ENCODE measurements at regions of chr5 and their contacts with region 1.

Region 1: DNA sequence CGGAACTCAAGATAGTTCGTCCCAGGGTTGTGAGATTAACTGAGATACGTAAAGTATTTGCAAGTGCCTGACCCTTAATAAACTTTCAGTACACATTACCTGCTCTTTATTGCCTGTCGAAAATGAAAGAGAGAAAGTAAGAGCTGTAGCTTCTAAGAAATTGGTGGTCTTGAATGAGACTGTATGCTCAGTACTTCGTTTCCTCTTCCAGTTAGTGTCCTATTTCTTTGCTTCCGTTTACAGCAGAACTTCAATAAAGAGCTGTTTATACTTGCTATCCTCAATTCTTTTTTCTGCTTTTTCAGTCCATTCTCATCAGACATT is 534 bp downstream of the SRFBP1 start:
- DNase-seq: no peak
- H3K4me3 Mint-ChIP-seq: peak overlapping the region; percentile 91
- H3K27ac Mint-ChIP-seq: peak overlapping the region; percentile 94
- H3K4me1 Mint-ChIP-seq: peaks cover 36% of the 10 kb centered on the region
- H3K27me3 Mint-ChIP-seq: peaks cover 6% of the 10 kb centered on the region

Region 2: DNA sequence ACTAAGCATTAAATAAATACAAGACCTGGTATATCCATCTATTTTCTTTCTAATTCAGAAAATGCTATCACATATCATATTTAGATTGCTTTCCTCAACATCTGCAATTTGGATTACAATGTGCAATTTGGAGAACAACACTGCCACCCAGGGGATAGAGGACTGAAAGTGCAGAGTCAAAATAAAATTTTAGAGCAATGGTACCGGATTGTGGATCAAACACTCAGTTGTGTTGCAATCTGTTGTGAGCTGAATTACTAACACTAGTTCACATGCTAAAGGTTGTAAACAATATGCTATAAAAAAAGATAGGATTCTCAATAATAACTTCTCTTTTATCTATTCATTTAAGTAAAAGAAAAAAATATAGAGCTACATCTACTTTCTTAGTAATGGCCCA is 12.4 kb before region 1 on chr5:
- CTCF ChIA-PET with region 1: interaction called, 13 read pairs
- intact Hi-C with region 1: no loop called
- DNase-seq: peak; percentile 53
- H3K4me3 Mint-ChIP-seq: no peak overlapping the region
- H3K27ac Mint-ChIP-seq: no peak overlapping the region
- H3K4me1 Mint-ChIP-seq: no peaks in the 10 kb centered on the region
- H3K27me3 Mint-ChIP-seq: peaks cover 6% of the 10 kb centered on the region

Region 3: DNA sequence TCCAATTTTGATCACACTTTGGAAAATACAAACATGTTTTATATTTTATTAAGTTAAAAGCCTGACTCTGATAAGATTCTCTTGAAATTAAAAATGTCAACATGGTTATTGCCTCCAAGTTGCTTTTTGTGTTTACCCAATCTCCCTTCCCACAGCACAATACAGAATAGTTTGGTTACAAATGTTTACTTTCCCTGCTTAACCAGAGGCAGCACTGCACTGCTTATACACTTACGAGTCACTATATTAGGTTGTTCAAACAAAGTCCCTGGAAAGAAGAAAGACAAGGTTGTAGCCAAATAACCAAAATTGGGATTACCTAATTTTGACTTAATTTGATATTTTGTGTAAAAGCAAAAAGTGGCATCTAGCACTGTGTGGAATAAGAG is 25.4 kb after region 1 on chr5:
- CTCF ChIA-PET with region 1: no interaction called
- intact Hi-C with region 1: loop called (anchors 1 kb)
- DNase-seq: no peak
- H3K4me3 Mint-ChIP-seq: no peak overlapping the region
- H3K27ac Mint-ChIP-seq: no peak overlapping the region
- H3K4me1 Mint-ChIP-seq: peaks cover 15% of the 10 kb centered on the region
- H3K27me3 Mint-ChIP-seq: no peaks in the 10 kb centered on the region

Region 4: DNA sequence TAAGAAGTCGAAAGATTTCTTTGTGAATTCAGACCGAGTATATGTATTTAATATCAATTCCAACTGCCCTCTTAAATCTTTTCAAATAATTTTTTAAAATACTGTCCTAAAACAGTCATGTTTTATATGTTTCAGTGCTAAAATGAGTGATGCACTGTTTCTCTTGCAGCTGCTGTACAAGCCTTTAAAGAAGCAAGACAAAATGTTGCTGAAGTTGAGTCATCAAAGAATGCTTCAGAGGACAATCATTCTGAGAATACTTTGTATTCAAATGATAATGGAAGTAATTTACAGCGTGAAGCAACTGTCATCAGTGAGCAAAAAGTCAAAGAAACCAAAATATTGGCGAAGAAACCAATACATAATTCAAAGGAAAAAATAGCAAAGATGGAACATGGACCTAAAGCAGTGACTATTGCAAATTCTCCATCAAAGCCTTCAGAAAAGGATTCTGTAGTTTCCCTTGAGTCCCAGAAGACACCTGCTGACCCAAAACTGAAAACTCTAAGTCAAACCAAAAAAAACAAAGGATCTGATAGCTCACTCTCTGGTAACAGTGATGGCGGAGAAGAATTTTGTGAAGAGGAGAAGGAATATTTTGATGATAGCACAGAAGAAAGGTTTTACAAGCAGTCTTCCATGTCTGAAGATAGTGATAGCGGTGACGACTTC is 57.7 kb after region 1 on chr5:
- CTCF ChIA-PET with region 1: no interaction called
- intact Hi-C with region 1: loop called (anchors 1 kb)
- DNase-seq: no peak
- H3K4me3 Mint-ChIP-seq: no peak overlapping the region
- H3K27ac Mint-ChIP-seq: no peak overlapping the region
- H3K4me1 Mint-ChIP-seq: peaks cover 9% of the 10 kb centered on the region
- H3K27me3 Mint-ChIP-seq: no peaks in the 10 kb centered on the region

Region 5: GRCh38 chr5:122030251-122030650 is 67.9 kb after region 1 on chr5:
- CTCF ChIA-PET with region 1: no interaction called
- intact Hi-C with region 1: no loop called
- DNase-seq: no peak
- H3K4me3 Mint-ChIP-seq: no peak overlapping the region
- H3K27ac Mint-ChIP-seq: no peak overlapping the region
- H3K4me1 Mint-ChIP-seq: peaks cover 3% of the 10 kb centered on the region
- H3K27me3 Mint-ChIP-seq: no peaks in the 10 kb centered on the region

Region 6: DNA sequence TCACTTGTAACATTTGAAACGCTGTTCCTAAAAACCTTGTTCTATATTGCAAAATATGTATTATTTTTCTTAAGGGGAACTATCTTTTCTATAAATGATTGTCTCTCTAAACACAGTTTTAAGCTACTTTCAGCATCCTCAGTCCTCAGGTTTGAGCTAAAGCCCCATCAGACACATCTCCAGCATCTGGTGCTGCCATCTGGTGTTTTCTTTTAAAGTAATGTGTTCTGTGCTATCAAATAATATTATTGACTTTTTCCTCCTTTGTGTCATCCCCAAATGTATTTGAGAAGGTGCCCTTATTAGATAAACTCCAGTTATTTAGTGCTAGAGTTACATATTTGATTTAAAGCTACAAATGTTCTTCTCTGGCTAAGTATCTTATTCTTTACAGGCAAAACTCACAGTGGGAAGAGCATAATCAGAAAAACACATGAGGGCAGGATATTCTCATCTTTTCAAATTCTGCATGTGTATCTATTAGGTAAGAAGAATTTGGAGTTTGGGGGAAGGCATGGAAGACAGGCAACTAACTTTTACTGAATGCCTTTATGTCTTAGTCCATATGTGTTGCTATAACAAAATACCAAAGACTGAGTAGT is 194.5 kb after region 1 on chr5:
- CTCF ChIA-PET with region 1: no interaction called
- intact Hi-C with region 1: loop called (anchors 2 kb)
- DNase-seq: peak; percentile 13
- H3K4me3 Mint-ChIP-seq: no peak overlapping the region
- H3K27ac Mint-ChIP-seq: no peak overlapping the region
- H3K4me1 Mint-ChIP-seq: peaks cover 12% of the 10 kb centered on the region
- H3K27me3 Mint-ChIP-seq: peaks cover 2% of the 10 kb centered on the region

Region 7: DNA sequence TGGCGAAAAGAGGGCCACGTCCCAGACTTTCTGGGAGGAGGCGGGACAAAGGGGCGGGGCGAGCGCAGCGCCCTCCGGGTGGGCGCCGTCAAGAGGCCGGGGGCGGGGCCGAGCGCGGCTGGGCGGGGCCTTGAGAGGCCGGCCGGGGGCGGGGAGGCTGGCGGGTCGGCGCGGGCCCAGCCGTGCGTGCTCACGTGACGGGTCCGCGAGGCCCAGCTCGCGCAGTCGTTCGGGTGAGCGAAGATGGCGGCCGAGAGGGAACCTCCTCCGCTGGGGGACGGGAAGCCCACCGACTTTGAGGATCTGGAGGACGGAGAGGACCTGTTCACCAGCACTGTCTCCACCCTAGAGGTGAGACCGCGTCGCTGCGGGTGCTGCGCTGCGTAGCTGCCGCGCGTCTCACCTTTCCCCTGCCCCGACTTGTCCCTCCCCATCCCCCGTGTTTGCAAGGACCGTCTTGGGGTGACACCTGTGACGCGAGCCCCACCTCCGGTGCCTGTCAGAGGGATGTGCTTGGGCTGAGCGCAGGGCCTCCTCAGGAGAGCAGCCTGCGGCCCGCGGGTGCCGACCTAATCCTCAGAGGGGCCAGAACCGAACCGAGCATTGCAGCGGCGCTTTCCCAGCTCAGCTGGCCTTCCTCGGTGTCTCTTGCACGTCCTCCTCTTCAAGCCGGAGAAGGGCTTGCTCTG is 812.7 kb after region 1 on chr5 and contains the start of gene SNX2:
- CTCF ChIA-PET with region 1: no interaction called
- intact Hi-C with region 1: loop called (anchors 1 kb)
- DNase-seq: peak; percentile 89
- H3K4me3 Mint-ChIP-seq: peak within 1 kb of the TSS; percentile 89
- H3K27ac Mint-ChIP-seq: peak within 1 kb of the TSS; percentile 78
- H3K4me1 Mint-ChIP-seq: peaks cover 24% of the 10 kb centered on the region
- H3K27me3 Mint-ChIP-seq: no peaks in the 10 kb centered on the region
- total RNA-seq, gene SNX2: 47.3 to 48.0 TPM